Lower lobe of right lung (tissue), 2 donors: ENCODE measurements at regions of chr17 and their contacts with region 1.

Region 1: GRCh38 chr17:50200457-50201275 is 765 bp downstream of the COL1A1 start:
- DNase-seq: peak; percentile 92
- ATAC-seq: peak; percentile 88 to 89
- H3K4me3 ChIP-seq: peak overlapping the region; percentile 57
- H3K27ac ChIP-seq: peak overlapping the region; percentile 79
- H3K4me1 ChIP-seq: peaks cover 48% of the 10 kb centered on the region
- H3K27me3 ChIP-seq: peaks cover 32% of the 10 kb centered on the region
- CTCF ChIP-seq: peak; percentile 99

Region 2: DNA sequence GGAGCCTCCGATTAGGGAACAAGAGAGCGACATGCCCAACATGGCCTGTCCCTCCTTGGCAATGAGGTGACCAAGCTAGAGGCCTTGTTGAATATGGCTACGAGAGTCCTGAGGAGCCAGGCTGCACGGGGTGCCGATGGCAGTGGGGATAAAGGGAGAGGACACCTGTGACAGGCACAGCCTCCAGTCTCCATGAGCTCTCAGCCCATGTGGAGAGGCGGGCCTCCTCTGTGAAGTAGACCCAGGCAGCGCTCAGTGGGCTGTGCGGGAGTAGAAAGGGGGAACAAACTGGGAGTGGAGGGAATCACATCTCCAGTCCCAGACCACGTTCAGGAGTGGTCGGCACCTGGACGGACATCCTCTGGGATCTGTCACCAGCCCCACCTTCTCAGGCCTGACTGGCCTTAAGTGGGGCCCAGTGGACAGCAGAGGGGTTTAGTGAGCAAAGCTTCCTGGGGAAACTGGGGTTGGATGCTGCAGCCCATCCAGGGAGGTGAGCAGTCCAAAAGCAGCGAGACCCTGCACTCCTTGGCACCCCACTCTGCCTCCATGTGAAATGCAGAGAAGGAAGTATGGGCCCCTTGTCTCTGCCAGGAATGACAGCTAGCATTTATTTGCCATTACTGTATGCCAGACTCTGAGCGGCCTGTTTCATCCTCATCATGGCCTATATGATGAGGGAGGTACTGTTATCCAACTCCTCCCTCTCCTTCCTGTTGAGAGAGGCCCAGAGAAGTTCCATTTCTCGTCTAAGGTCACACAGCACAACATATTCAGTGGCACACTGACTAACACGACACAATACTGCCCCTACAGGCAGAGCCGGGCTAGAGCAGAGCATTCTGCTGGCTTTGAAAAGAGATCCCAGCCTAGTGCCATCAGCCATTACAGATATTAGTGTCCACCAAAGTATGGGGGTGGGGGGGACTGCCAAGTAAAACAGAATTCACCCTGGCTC is 69.1 kb after region 1 on chr17:
- intact Hi-C with region 1: loop called (anchors 10 kb)
- DNase-seq: peak; percentile 80
- ATAC-seq: peak; percentile 66 to 70
- H3K4me3 ChIP-seq: no peak overlapping the region
- H3K27ac ChIP-seq: peak overlapping the region; percentile 39
- H3K4me1 ChIP-seq: peaks cover 53% of the 10 kb centered on the region
- H3K27me3 ChIP-seq: peaks cover 12% of the 10 kb centered on the region
- CTCF ChIP-seq: peak; percentile 81